ENCODE measurements at regions of chr2 and their contacts with region 1.

Region 1: DNA sequence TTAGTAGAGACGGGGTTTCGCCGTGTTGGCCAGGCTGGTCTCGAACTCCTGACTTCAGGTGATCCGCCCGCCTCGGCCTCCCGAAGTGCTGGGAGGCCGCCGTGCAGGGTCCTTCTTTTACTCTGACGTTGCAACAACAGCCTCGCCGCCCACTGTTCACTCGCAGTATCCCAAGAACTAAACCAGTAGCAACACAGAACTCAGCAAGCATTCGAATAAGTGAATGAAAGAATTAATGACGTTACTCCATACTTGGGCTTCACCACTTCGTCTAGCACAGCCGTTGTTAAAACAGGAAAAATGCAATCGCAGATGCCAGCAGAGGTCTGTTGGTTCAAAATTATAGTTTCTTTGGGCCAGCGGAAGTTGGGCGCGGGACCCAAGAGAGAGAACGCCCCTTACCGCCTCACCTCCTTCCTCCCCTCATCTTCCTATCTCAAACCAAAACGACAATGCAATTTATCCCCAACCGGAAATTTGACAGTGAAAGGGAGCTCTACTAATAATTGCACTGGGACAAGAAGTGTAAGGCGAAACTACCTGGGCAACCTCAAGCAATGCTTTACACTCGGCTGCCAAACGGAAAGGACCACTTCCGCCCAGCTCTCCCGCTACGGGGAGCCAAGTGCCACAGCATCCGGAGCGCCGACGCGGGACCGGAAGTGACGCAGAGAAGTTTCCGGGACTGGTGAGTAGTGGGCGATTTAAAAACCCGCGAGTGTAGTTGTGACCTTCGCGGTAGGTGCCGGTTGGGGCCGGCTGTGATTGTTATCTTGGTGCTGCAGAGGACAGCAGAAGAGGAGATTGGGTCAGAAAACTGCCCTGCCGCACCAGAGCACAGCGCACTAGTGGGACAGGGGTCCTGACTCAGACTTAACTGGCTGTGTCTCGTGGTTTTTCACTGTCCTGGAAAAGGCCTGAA is at the starts of genes NIF3L1 and PPIL3:
- DNase-seq: peak; percentile 99
- ATAC-seq: peak; percentile 83
- H3K4me3 Mint-ChIP-seq: peak within 1 kb of the TSS; percentile 87
- H3K27ac Mint-ChIP-seq: peak within 1 kb of the TSS; percentile 99
- H3K4me1 Mint-ChIP-seq: peaks cover 46% of the 10 kb centered on the region
- H3K27me3 Mint-ChIP-seq: no peaks in the 10 kb centered on the region
- CTCF ChIP-seq: no peak
- total RNA-seq, gene NIF3L1: 30.8 to 35.3 TPM
- total RNA-seq, gene PPIL3: 97.9 to 99.4 TPM

Region 2: GRCh38 chr2:200845669-200846325 is 43.2 kb before region 1 on chr2:
- CTCF ChIA-PET with region 1: no interaction called
- POLR2A ChIA-PET with region 1: no interaction called
- intact Hi-C with region 1: no loop called
- DNase-seq: no peak
- ATAC-seq: no peak
- H3K4me3 Mint-ChIP-seq: no peak overlapping the region
- H3K27ac Mint-ChIP-seq: no peak overlapping the region
- H3K4me1 Mint-ChIP-seq: no peaks in the 10 kb centered on the region
- H3K27me3 Mint-ChIP-seq: no peaks in the 10 kb centered on the region
- CTCF ChIP-seq: no peak

Region 3: DNA sequence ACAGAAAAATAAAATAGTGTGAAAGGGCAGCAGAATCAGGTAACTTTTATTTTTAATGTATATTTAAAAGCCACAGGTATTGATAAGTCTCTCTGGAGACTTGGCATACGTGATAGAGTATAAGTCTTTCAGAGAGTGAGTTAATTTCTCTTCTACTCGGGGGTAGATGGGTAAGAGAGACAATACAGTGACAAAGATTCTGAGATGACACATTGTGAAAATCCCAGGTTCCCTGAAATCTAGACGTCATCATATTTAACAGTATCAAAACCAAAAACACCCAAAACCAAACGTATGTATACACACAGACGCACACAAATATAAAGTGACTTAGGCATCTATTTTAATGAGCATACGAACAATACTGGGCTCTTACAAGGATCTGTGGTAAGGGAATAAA is 33.5 kb after region 1 on chr2:
- CTCF ChIA-PET with region 1: no interaction called
- POLR2A ChIA-PET with region 1: no interaction called
- intact Hi-C with region 1: no loop called
- DNase-seq: no peak
- ATAC-seq: peak; percentile 88
- H3K4me3 Mint-ChIP-seq: no peak overlapping the region
- H3K27ac Mint-ChIP-seq: peak overlapping the region; percentile 69
- H3K4me1 Mint-ChIP-seq: peaks cover 6% of the 10 kb centered on the region
- H3K27me3 Mint-ChIP-seq: no peaks in the 10 kb centered on the region
- CTCF ChIP-seq: no peak

Region 4: DNA sequence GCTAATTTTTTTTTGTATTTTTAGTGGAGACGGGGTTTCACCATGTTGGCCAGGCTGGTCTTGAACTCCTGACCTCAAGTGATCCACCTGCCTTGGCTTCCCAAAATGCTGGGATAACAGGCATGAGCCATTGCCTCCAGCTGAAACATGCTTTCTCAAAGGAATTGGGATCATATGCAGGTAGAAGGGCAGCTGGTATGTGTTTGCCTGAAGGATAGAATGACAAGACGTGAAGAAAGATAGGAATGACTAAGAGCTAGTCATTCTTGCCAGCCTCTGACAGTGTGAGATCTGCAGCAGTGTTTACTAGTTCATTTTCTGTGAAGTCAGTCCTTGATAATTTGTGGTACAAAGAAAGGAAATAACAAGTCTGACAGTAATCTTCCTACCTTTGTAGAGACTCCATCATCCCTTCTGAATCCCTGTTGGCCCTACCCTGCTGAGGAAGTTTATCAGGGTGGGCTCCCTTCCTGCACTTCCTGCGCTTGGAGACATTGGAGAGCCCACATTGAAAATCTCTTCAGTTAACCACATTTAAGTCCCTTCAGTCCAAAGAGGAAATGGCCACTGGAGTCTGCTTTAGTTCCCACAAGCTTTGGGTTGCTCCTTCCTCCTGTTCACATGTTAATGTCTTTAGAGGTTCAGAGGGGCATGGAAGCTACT is 241.7 kb after region 1 on chr2:
- CTCF ChIA-PET with region 1: no interaction called
- POLR2A ChIA-PET with region 1: interaction called, 4 read pairs
- intact Hi-C with region 1: loop called (anchors 2 kb)
- DNase-seq: peak; percentile 61
- ATAC-seq: peak; percentile 42
- H3K4me3 Mint-ChIP-seq: peak overlapping the region; percentile 95
- H3K27ac Mint-ChIP-seq: peak overlapping the region; percentile 98
- H3K4me1 Mint-ChIP-seq: peaks cover 55% of the 10 kb centered on the region
- H3K27me3 Mint-ChIP-seq: no peaks in the 10 kb centered on the region
- CTCF ChIP-seq: no peak

Region 5: DNA sequence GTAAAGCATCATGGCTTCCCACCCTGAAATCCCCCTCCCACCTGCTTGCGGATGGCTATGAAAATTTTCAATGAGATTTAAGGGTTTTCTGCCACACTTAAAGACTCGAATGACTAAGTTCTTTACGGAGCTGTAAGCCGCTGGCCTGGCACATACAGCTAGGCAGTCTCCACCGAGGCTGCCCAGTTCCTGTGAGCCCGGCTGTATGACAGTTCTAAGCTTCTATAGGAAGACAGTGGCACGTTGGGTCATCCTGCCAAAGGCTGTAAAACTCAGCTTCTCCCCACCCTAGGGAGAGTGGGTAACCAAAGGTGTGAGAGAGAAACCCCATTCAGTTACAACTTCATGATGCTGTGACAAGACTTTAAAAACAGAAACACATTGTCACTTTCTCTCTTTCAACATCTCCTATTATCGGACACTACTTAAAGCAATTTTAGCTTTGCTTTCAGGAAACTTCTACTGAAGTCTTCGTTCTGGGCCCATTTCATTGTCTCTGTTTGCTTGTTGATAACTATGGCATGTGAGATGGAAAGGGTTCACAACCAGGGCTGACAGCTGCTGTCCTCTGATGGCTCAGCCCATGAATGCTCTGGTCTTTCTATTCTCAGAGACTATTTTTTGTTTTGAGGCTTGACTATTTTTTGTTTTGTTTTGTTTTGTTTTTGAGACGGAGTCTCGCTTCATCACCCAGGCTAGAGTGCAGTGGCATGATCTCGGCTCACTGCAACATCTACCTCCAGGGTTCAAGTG is 378.5 kb after region 1 on chr2:
- CTCF ChIA-PET with region 1: no interaction called
- POLR2A ChIA-PET with region 1: no interaction called
- intact Hi-C with region 1: no loop called
- DNase-seq: peak; percentile 24
- ATAC-seq: no peak
- H3K4me3 Mint-ChIP-seq: peak overlapping the region; percentile 2
- H3K27ac Mint-ChIP-seq: peak overlapping the region; percentile 36
- H3K4me1 Mint-ChIP-seq: peaks cover 79% of the 10 kb centered on the region
- H3K27me3 Mint-ChIP-seq: no peaks in the 10 kb centered on the region
- CTCF ChIP-seq: no peak